GM10248 (cell line): ENCODE measurements at regions of chr7 and their contacts with region 1.

Region 1: GRCh38 chr7:37826825-37827224 is 21.6 kb upstream of the NME8 start:
- DNase-seq: peak; percentile 24
- CTCF ChIP-seq: no peak

Region 2: DNA sequence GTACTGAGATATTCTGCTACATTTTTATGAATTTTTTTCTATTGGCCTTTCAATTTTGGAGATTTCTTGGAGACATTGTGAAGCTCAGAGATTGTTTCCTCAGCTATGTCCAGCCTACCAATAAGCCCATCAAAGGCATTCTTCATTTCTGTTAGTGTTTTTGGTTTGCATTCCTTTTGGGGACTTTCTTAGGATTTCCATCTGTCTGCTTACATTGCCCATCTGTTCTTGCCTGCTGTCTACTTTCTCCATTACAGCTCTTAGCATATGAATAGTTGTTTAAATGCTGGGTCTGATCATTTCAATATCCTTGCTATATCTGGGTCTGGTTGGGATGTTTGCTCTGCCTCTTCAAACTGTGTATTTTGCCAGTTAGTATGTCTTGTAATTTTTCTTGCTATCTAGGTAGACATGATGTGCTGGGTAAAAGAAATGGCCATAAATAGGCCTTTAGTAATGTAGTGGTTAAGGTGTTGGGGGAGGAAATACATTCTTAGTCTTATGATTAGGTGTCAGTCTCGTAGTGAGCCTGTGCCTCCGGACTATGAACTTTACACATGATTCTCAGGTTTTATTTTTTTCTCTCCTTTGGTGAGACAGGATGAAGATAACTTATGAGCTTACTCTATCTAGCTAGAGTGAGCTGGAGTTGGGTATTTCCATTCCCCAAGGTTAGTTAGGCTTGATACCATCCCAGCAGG is 11.0 kb before region 1 on chr7:
- CTCF ChIA-PET with region 1: interaction called, 12 read pairs
- POLR2A ChIA-PET with region 1: no interaction called
- DNase-seq: peak; percentile 29
- CTCF ChIP-seq: no peak

Region 3: DNA sequence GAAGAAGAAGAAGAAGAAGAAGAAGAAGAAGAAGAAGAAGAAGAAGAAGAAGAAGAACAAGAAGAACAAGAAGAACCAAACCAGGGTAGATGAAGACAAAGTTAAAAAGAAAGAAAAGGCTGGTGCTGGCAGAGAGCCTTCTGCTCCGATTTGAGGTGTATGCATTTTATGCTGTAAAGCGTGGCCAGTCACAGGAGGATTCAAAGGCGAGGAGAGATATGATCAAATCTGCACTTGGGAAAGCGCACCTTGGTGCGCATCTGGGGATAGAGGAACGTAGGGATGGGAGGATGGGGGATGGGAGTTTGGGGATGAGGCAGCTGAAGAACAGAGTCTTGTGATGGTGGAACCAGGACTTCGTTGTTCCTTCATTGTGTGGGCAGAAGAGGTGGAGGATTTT is 21.5 kb after region 1 on chr7 and contains the start of gene NME8:
- CTCF ChIA-PET with region 1: no interaction called
- POLR2A ChIA-PET with region 1: no interaction called
- DNase-seq: no peak
- CTCF ChIP-seq: no peak